ENCODE measurements at regions of chrX and their contacts with region 1.

Region 1: DNA sequence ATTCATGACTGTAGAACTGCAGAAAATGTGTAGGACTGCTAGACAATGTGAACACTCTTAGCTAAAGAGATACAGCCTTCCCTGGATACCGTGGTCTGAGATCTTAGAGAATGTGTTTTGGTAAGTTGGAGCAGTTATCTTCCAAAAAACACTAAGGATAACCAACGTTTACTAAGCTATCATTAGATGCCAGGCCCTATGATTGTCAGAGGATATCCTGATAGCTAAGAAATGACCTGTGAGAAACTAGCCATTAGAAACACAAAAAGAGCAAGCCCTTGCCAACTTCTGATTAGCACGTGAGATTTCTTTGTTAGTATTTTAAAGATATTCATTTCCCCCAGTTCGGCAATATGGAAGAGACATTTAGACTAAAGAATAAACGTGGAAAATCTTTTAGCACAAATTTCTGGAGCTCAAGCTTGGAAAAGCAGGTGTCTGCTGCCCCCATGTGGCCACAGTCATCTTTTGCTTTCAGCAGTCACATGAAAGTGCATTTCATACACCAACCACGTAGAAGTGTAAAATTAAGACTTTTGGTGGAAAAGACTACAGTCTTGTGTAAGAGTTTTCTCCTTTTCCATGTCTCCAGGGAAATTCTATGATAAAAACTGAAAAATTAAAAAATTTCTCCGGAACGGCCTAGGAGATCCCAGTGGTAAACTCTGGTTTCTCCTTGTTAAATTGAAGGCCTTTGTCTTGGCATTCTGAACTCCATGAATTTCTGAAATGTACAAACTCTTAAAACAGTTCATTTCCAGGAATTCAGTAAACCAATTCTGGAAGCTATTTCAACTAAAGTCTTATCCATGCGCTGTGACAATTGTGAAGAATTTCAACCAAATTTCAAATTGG is 136.4 kb downstream of the ZNF674 start:
- DNase-seq: peak; percentile 81
- ATAC-seq: no peak
- H3K4me3 Mint-ChIP-seq: no peak overlapping the region
- H3K27ac Mint-ChIP-seq: no peak overlapping the region
- H3K4me1 Mint-ChIP-seq: peaks cover 4% of the 10 kb centered on the region
- H3K27me3 Mint-ChIP-seq: no peaks in the 10 kb centered on the region

Region 2: GRCh38 chrX:45515262-45516215 is 893.2 kb before region 1 on chrX:
- CTCF ChIA-PET with region 1: no interaction called
- POLR2A ChIA-PET with region 1: no interaction called
- intact Hi-C with region 1: loop called in 1 of 2 experiments (anchors 10 kb)
- DNase-seq: peak; percentile 59
- ATAC-seq: peak; percentile 92
- H3K4me3 Mint-ChIP-seq: peak overlapping the region; percentile 43
- H3K27ac Mint-ChIP-seq: peak overlapping the region; percentile 39
- H3K4me1 Mint-ChIP-seq: peaks cover 23% of the 10 kb centered on the region
- H3K27me3 Mint-ChIP-seq: no peaks in the 10 kb centered on the region

Region 3: GRCh38 chrX:46220822-46221221 is 188.0 kb before region 1 on chrX:
- CTCF ChIA-PET with region 1: no interaction called
- POLR2A ChIA-PET with region 1: no interaction called
- intact Hi-C with region 1: no loop called
- DNase-seq: no peak
- ATAC-seq: no peak
- H3K4me3 Mint-ChIP-seq: no peak overlapping the region
- H3K27ac Mint-ChIP-seq: no peak overlapping the region
- H3K4me1 Mint-ChIP-seq: no peaks in the 10 kb centered on the region
- H3K27me3 Mint-ChIP-seq: no peaks in the 10 kb centered on the region

Region 4: GRCh38 chrX:46381630-46382029 is 27.1 kb before region 1 on chrX:
- CTCF ChIA-PET with region 1: interaction called, 10 read pairs
- POLR2A ChIA-PET with region 1: no interaction called
- intact Hi-C with region 1: loop called in 1 of 2 experiments (anchors 1 kb)
- DNase-seq: peak; percentile 56
- ATAC-seq: peak; percentile 61
- H3K4me3 Mint-ChIP-seq: no peak overlapping the region
- H3K27ac Mint-ChIP-seq: no peak overlapping the region
- H3K4me1 Mint-ChIP-seq: no peaks in the 10 kb centered on the region
- H3K27me3 Mint-ChIP-seq: no peaks in the 10 kb centered on the region